Gastrocnemius medialis (tissue), 4 donors: ENCODE measurements at regions of chr3 and their contacts with region 1.

Region 1: DNA sequence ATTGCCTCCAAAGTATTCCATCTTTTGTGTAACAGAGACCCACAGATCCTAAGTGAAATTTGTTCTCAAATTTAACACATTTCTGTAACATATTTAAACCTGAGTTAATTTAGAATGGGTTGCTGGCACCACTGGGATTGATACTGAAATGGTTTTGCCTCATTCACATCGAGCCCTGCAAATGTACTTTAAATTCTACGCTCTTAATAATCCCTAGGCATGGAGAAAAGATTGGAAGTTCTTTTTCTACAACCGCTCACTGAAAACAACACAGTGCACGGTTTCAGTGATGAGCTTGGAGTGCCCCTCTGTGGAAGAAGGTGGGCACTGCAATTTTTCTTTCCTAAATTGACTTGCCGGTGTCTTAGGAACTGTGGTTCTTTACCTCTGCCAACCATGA is 109.9 kb upstream of the ATP11B start:
- DNase-seq: peak in 1 of 2 donors; percentile 40
- ATAC-seq: peak; percentile 92 to 93
- H3K4me3 ChIP-seq: peak overlapping the region; percentile 55 to 73 (median 60)
- H3K27ac ChIP-seq: no peak overlapping the region
- H3K4me1 ChIP-seq: peaks cover 0 to 4% of the 10 kb centered on the region in 2 donors
- H3K27me3 ChIP-seq: peaks cover 0 to 5% (median 5%) of the 10 kb centered on the region in 3 donors
- CTCF ChIP-seq: peak; percentile 52 to 87 (median 74)
- POLR2A ChIP-seq: no peak

Region 2: GRCh38 chr3:181326637-181327223 is 1356.7 kb before region 1 on chr3:
- in situ Hi-C with region 1: loop called in 1 of 4 experiments (anchors 25 kb)
- intact Hi-C with region 1: loop called (anchors 5 kb)
- DNase-seq: no peak
- ATAC-seq: no peak
- H3K4me3 ChIP-seq: no peak overlapping the region
- H3K27ac ChIP-seq: no peak overlapping the region
- H3K4me1 ChIP-seq: no peaks in the 10 kb centered on the region
- H3K27me3 ChIP-seq: peaks cover 0 to 2% (median 0%) of the 10 kb centered on the region in 3 donors
- CTCF ChIP-seq: peak in 4 of 5 experiments; percentile 13 to 64 (median 33)
- POLR2A ChIP-seq: no peak

Region 3: DNA sequence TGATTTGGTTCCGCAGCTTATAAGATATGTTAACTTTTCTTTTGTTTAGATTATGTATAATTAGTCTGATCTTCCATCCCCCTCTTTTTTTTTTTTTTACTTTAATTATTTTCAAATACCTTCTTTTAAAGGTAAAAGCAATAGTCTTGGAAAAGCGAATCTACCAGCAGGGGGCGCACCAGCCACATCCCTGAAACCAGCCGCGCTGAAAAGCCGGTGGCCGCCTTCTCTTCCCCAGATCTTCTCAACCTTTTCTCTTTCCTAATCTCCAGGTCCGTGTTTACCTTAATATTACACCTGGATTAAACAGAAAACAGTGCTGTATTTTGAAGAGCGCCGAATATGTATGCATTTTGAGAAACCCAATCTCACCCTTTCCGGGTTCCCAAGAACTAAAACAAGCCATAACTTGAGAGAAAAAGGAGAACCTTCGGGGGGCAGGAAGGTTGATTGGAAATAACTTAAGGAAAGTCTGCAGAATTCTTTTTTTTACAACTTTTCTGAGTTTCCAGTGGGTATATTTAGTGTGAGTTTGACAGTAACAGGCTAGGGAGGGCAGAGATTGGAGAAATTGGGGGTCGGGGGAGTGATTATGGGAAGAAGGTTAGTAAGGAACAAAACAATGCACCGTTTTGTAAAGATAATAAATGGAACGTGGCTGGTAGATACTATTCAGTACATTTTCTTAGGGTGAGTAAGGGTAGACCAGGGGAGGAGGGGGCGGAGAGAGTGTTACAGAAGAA is 973.7 kb before region 1 on chr3:
- in situ Hi-C with region 1: loop called (anchors 10 kb)
- intact Hi-C with region 1: loop called (anchors 1 kb)
- DNase-seq: peak in 1 of 2 donors; percentile 35
- ATAC-seq: peak; percentile 55 to 65
- H3K4me3 ChIP-seq: no peak overlapping the region
- H3K27ac ChIP-seq: no peak overlapping the region
- H3K4me1 ChIP-seq: peaks cover 0 to 13% of the 10 kb centered on the region in 2 donors
- H3K27me3 ChIP-seq: peaks cover 93 to 100% (median 96%) of the 10 kb centered on the region in 3 donors
- CTCF ChIP-seq: peak; percentile 56 to 84 (median 68)
- POLR2A ChIP-seq: no peak